Ovary (tissue), 10 donors: ENCODE measurements at regions of chr5 and their contacts with region 1.

Region 1: GRCh38 chr5:124130816-124131215 is 615.6 kb downstream of the ZNF608 start:
- DNase-seq: no peak
- H3K4me3 ChIP-seq: no peak overlapping the region
- H3K27ac ChIP-seq: no peak overlapping the region
- H3K4me1 ChIP-seq: no peaks in the 10 kb centered on the region
- H3K27me3 ChIP-seq: no peaks in the 10 kb centered on the region
- CTCF ChIP-seq: no peak
- EP300 ChIP-seq: no peak
- POLR2A ChIP-seq: no peak

Region 2: GRCh38 chr5:124162779-124163532 is 32.1 kb after region 1 on chr5:
- intact Hi-C with region 1: loop called in 1 of 4 experiments (anchors 1 kb)
- DNase-seq: no peak
- H3K4me3 ChIP-seq: no peak overlapping the region
- H3K27ac ChIP-seq: no peak overlapping the region
- H3K4me1 ChIP-seq: no peaks in the 10 kb centered on the region
- H3K27me3 ChIP-seq: no peaks in the 10 kb centered on the region
- CTCF ChIP-seq: no peak
- EP300 ChIP-seq: no peak
- POLR2A ChIP-seq: no peak